Naive thymus-derived CD4-positive, alpha-beta T cell (primary cell): ENCODE measurements at regions of chr1 and their contacts with region 1.

Region 1: GRCh38 chr1:161766102-161766981 is at the start of gene ATF6:
- DNase-seq: peak; percentile 55 to 84 (median 77)
- ATAC-seq: peak; percentile 88
- H3K4me3 ChIP-seq: peak within 1 kb of the TSS; percentile 100
- H3K4me3 Mint-ChIP-seq: peak within 1 kb of the TSS; percentile 96 to 100 (median 99)
- H3K27ac ChIP-seq: peak within 1 kb of the TSS; percentile 93
- H3K27ac Mint-ChIP-seq: peak within 1 kb of the TSS; percentile 96 to 99 (median 98)
- H3K4me1 ChIP-seq: peaks cover 21 to 26% of the 10 kb centered on the region in 2 donors
- H3K4me1 Mint-ChIP-seq: peaks cover 24 to 53% (median 43%) of the 10 kb centered on the region in 7 donors
- H3K27me3 ChIP-seq: no peaks in the 10 kb centered on the region
- H3K27me3 Mint-ChIP-seq: no peaks in the 10 kb centered on the region
- total RNA-seq, gene ATF6: 22.4 to 27.5 (median 26.9) TPM

Region 2: DNA sequence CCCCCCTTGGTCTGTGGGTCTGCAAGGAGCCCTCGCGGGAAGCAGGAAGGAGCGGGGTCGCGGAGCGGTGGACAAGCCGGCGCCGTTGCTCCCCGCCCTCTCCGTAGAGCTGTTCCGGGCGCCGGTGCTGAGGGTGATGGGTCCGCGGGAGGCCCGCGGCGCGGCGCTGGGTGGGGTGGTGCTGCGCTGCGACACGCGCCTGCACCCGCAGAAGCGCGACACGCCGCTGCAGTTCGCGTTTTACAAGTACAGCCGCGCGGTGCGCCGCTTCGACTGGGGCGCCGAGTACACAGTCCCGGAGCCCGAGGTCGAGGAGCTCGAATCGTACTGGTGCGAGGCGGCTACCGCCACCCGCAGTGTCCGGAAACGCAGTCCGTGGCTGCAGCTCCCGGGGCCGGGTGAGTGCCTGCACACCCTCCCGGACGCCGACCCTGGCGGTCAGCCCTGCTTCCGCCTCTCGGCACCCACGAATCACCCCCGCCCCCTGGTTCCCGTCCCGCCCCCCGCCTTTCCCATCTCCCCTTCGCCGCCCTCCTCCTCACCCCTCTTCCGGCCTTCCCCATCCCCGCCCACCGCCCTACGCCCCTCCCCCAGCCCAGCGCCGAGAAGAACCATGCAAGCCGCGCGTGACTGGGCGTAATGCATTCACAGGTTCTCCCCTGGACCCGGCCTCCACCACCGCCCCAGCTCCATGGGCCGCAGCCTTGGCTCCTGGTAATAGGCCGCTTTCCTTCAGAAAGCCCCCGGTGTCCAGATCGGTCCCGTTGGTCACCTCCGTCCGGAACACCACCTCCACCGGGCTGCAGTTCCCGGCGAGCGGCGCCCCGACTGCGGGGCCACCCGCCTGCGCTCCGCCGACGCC is 39.5 kb before region 1 on chr1:
- CTCF ChIA-PET with region 1: interaction called, 5 read pairs
- POLR2A ChIA-PET with region 1: interaction called, 3 read pairs
- intact Hi-C with region 1: loop called (anchors 1 kb)
- DNase-seq: peak; percentile 48 to 68 (median 64)
- ATAC-seq: peak; percentile 73
- H3K4me3 ChIP-seq: peak overlapping the region; percentile 93
- H3K4me3 Mint-ChIP-seq: peak overlapping the region; percentile 89 to 100 (median 99)
- H3K27ac ChIP-seq: peak overlapping the region; percentile 59
- H3K27ac Mint-ChIP-seq: peak overlapping the region in 6 of 9 donors; percentile 38 to 94 (median 72)
- H3K4me1 ChIP-seq: peaks cover 11 to 16% of the 10 kb centered on the region in 2 donors
- H3K4me1 Mint-ChIP-seq: peaks cover 30 to 51% (median 35%) of the 10 kb centered on the region in 7 donors
- H3K27me3 ChIP-seq: no peaks in the 10 kb centered on the region
- H3K27me3 Mint-ChIP-seq: peaks cover 0 to 76% (median 0%) of the 10 kb centered on the region in 5 donors

Region 3: DNA sequence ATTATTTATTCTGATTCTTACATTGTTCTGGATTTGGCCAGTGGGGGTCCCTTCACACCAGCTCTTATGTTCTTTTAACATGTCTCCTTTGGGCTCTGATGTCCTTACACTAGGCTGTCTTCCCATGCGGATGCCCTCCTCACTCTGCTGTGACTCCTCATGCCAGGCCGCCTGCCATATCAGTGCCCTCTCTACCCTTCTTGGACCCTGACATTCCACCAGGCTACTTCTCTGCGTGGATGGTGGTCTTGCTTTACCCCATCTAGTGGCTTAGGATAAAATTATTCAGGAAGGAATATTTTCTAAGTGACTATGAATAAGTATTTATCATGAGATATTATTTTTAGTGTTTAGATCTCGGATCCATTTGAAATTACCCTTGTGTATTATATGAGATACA is 21.0 kb after region 1 on chr1:
- CTCF ChIA-PET with region 1: interaction called, 5 read pairs
- POLR2A ChIA-PET with region 1: no interaction called
- intact Hi-C with region 1: loop called (anchors 1 kb)
- DNase-seq: no peak
- ATAC-seq: no peak
- H3K4me3 ChIP-seq: no peak overlapping the region
- H3K4me3 Mint-ChIP-seq: no peak overlapping the region
- H3K27ac ChIP-seq: no peak overlapping the region
- H3K27ac Mint-ChIP-seq: peak overlapping the region in 1 of 9 donors; percentile 63
- H3K4me1 ChIP-seq: no peaks in the 10 kb centered on the region
- H3K4me1 Mint-ChIP-seq: peaks cover 0 to 18% (median 6%) of the 10 kb centered on the region in 7 donors
- H3K27me3 ChIP-seq: no peaks in the 10 kb centered on the region
- H3K27me3 Mint-ChIP-seq: no peaks in the 10 kb centered on the region

Region 4: GRCh38 chr1:162040681-162041080 is 274.3 kb after region 1 on chr1:
- CTCF ChIA-PET with region 1: interaction called, 38 read pairs
- POLR2A ChIA-PET with region 1: no interaction called
- intact Hi-C with region 1: loop called (anchors 1 kb)
- DNase-seq: no peak
- ATAC-seq: no peak
- H3K4me3 ChIP-seq: no peak overlapping the region
- H3K4me3 Mint-ChIP-seq: no peak overlapping the region
- H3K27ac ChIP-seq: no peak overlapping the region
- H3K27ac Mint-ChIP-seq: peak overlapping the region in 1 of 9 donors; percentile 12
- H3K4me1 ChIP-seq: no peaks in the 10 kb centered on the region
- H3K4me1 Mint-ChIP-seq: peaks cover 0 to 4% (median 0%) of the 10 kb centered on the region in 7 donors
- H3K27me3 ChIP-seq: no peaks in the 10 kb centered on the region
- H3K27me3 Mint-ChIP-seq: peaks cover 5 to 20% (median 10%) of the 10 kb centered on the region in 5 donors

Region 5: DNA sequence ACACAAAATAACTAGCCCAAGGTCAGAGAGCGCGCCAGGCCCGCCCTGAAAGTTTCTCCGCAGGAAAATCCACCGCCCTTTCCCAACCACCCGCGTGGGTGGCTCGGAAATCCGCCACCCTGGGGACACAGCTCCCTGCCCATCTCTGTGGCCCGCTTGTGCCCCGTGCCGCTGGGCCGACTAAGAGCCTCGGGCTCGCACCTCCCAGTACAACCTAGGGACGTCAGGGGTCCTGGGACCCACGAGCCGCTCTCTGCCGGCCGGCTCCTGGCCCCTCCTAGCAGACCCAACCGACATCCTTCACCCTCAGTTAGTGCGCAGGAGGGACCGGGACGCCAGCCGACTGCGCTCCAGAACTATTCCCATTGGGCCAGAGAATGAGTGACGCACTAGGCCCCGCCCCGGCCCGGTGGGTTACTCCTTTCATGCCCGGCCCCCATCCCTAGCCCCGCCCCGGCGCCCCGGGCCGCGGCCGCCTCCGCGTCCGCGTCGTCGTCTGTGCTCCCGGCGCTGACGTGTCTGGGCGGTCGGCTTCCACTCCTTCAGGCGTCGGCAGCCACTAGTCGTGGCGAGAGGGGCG is 794.8 kb after region 1 on chr1:
- CTCF ChIA-PET with region 1: no interaction called
- POLR2A ChIA-PET with region 1: no interaction called
- intact Hi-C with region 1: loop called in 1 of 2 experiments (anchors 5 kb)
- DNase-seq: peak; percentile 97 to 99 (median 97)
- ATAC-seq: peak; percentile 97
- H3K4me3 ChIP-seq: peak overlapping the region; percentile 91
- H3K4me3 Mint-ChIP-seq: peak overlapping the region; percentile 89 to 98 (median 96)
- H3K27ac ChIP-seq: peak overlapping the region; percentile 91
- H3K27ac Mint-ChIP-seq: peak overlapping the region; percentile 95 to 99 (median 97)
- H3K4me1 ChIP-seq: peaks cover 10% of the 10 kb centered on the region in 2 donors
- H3K4me1 Mint-ChIP-seq: peaks cover 16 to 51% (median 44%) of the 10 kb centered on the region in 7 donors
- H3K27me3 ChIP-seq: no peaks in the 10 kb centered on the region
- H3K27me3 Mint-ChIP-seq: no peaks in the 10 kb centered on the region